Ascending aorta (tissue), 2 donors: ENCODE measurements at regions of chr16 and their contacts with region 1.

Region 1: GRCh38 chr16:81006814-81007696 is at the starts of genes CENPN and CMC2:
- DNase-seq: peak; percentile 99
- H3K4me3 ChIP-seq: peak within 1 kb of the TSS; percentile 80 to 89
- H3K27ac ChIP-seq: peak within 1 kb of the TSS; percentile 98
- H3K4me1 ChIP-seq: peaks cover 3 to 17% of the 10 kb centered on the region in 2 donors
- H3K27me3 ChIP-seq: no peaks in the 10 kb centered on the region
- CTCF ChIP-seq: peak in 1 of 3 experiments; percentile 10
- total RNA-seq, gene CENPN: not detected
- total RNA-seq, gene CMC2: 4.0 TPM

Region 2: GRCh38 chr16:80883159-80883642 is 123.9 kb before region 1 on chr16:
- intact Hi-C with region 1: no loop called
- DNase-seq: no peak
- H3K4me3 ChIP-seq: no peak overlapping the region
- H3K27ac ChIP-seq: no peak overlapping the region
- H3K4me1 ChIP-seq: no peaks in the 10 kb centered on the region
- H3K27me3 ChIP-seq: no peaks in the 10 kb centered on the region
- CTCF ChIP-seq: no peak

Region 3: DNA sequence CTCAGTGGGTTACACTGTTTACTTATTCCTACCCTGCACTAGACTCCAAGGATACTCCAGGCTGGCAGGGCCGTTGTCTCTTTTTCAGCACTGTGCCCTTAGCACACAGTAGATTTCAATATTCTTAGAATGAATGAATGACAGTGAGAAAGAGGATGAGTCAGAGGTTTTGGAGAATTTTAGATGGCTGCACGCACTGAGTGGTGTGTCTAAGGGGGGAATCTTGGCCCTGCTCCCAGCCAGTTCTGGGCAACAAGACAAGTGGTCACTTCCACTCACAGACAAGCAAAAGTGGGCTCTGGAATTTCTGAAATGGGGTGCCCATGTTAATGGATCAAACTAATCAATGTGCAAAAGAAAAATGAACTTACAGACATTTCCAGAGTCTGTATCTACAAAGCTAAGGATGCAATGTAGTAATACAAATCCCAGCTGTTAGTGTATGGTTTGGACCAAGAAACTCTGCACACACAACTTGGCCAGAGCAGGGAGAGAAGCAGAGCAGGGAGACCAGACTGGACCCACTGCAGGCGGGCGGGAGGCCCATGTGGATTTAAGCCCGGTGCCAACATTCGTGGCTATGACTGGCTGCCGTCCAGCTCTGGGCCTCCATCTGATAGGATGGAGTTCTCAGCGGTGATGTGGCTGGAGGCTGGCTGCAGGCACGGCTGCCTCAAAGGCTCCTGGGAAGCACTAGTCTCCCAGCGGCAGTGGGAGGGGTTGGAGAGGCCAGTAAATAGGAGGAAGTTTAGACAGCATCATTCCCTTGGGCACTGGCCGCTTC is 107.1 kb before region 1 on chr16:
- intact Hi-C with region 1: loop called (anchors 1 kb)
- DNase-seq: peak; percentile 77 to 96
- H3K4me3 ChIP-seq: peak overlapping the region in 1 of 2 donors; percentile 38
- H3K27ac ChIP-seq: peak overlapping the region; percentile 76 to 77
- H3K4me1 ChIP-seq: peaks cover 9% of the 10 kb centered on the region in 2 donors
- H3K27me3 ChIP-seq: no peaks in the 10 kb centered on the region
- CTCF ChIP-seq: no peak

Region 4: GRCh38 chr16:81035398-81035974 is 28.4 kb after region 1 on chr16 and contains the start of gene ATMIN:
- intact Hi-C with region 1: loop called (anchors 1 kb)
- DNase-seq: peak; percentile 25 to 90
- H3K4me3 ChIP-seq: peak within 1 kb of the TSS; percentile 90 to 93
- H3K27ac ChIP-seq: peak within 1 kb of the TSS in 1 of 2 donors; percentile 52
- H3K4me1 ChIP-seq: peaks cover 0 to 9% of the 10 kb centered on the region in 2 donors
- H3K27me3 ChIP-seq: no peaks in the 10 kb centered on the region
- CTCF ChIP-seq: peak; percentile 90 to 97 (median 90)
- total RNA-seq, gene ATMIN: 11.9 TPM

Region 5: GRCh38 chr16:81095953-81096717 is 89.1 kb after region 1 on chr16 and contains the start of gene GCSH:
- intact Hi-C with region 1: loop called (anchors 1 kb)
- DNase-seq: peak; percentile 97 to 99
- H3K4me3 ChIP-seq: peak within 1 kb of the TSS; percentile 90 to 99
- H3K27ac ChIP-seq: peak within 1 kb of the TSS; percentile 78 to 84
- H3K4me1 ChIP-seq: no peaks in the 10 kb centered on the region
- H3K27me3 ChIP-seq: no peaks in the 10 kb centered on the region
- CTCF ChIP-seq: no peak
- total RNA-seq, gene GCSH: 5.0 TPM

Region 6: DNA sequence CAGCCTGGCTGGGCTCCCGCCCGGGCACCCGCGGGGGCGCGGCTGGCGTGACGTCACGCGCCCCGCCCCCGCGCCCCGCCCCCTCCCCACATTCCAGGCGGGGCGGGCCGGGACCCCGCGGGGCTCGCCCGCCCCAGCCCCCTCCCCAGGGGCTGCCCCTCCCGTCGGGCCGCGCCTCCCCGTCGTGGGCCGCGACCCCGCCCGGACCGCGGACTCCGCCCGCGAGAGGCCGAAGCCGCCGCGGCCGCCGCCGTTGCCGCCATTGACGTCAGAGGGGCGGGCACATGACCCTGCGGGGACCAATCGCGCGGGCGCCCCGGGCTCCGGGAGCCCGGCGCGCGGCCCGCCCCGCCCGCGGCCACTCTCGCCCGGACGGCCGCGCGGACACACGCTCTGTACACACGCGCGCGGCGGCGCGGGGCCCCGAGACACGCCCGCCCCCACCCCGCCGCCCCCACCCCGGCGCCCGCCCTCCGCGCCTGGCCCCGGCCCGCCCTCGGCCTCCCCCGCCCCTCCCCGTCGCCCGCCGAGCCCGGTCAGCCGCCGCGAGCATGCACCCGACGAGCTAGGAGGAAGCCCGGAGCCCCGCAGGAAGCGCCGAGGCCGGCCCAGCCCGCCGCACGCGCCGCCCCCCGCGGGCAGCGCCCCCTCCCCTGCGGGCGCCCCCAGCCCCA is 437.5 kb after region 1 on chr16 and contains the start of gene CMIP:
- intact Hi-C with region 1: loop called (anchors 10 kb)
- DNase-seq: peak in 1 of 2 donors; percentile 89
- H3K4me3 ChIP-seq: peak within 1 kb of the TSS; percentile 58 to 75
- H3K27ac ChIP-seq: peak within 1 kb of the TSS; percentile 69 to 70
- H3K4me1 ChIP-seq: peaks cover 0 to 4% of the 10 kb centered on the region in 2 donors
- H3K27me3 ChIP-seq: no peaks in the 10 kb centered on the region
- CTCF ChIP-seq: no peak
- total RNA-seq, gene CMIP: 110 TPM

Region 7: DNA sequence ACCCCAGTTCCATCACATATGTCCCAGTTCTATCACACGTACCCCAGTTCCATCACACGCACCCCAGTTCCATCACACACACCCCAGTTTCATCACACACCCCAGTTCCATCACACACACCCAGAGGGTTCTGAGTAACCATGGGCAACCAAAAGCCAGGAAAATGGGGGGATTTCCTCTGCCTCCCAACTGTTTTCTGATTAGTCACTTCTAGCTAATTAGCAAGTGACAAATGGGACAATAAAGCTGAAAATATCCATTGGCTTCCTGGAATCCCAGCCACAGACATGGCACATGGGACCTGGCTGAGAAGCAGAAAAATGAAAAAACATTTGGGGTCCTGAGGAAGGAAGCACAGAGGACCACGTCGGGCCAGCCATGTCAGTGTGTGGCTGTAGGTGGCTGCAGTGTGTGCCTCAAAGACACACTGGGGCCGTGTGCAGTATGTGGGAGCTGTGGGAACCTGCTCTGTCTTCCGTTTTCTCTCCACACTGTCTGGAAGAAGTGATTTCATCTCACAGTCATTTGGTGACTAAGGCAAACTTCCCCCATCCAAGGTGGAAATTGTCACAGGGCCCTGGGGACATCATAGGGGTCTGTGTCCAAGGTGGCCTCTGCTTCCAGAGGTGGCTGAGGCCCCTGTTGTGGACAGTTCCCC is 544.2 kb after region 1 on chr16:
- intact Hi-C with region 1: no loop called
- DNase-seq: no peak
- H3K4me3 ChIP-seq: no peak overlapping the region
- H3K27ac ChIP-seq: peak overlapping the region in 1 of 2 donors; percentile 18
- H3K4me1 ChIP-seq: peaks cover 8 to 11% of the 10 kb centered on the region in 2 donors
- H3K27me3 ChIP-seq: no peaks in the 10 kb centered on the region
- CTCF ChIP-seq: no peak